PC-3 (cell line): ENCODE measurements at regions of chr11 and their contacts with region 1.

Region 1: DNA sequence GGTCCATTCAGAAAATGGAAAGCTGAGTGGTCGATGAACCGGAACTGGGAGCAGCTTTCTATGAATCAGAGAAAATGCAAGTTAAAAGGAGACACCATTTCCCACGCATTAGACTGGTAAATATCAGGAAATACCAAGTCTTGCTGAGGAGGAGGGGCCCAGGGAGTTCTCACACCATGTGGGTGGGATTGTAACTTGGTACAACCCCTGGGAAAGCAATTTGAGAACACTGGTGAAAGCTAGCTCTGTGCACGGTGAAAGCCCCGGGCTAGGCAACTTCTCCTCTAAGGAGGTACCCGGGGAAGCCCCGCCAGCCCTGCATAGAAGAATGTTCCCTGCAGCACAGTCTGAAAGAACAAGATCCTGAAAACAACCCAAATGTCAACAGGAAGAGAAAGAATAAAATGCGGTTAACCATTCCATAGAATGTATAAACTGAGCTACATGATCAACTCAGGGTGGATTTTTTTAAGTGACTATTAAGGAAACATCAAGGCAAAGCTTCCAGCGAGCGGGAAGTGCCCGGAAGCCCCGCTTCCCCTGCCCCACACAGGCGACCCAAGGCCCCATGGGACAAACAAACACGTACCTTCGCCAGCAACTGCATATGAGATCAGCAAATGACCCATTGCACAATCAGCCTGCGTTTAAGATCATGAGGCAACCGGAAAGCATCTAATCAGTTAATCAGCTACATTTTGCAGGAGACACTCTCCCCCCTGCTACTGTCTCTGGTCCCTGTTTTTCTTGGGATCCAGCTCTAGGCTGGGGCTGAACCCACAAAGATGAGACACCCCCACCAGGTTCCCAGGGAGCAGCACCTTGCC is 11.3 kb downstream of the SHANK2 start:
- DNase-seq: no peak
- ATAC-seq: no peak
- H3K4me3 ChIP-seq: no peak overlapping the region
- H3K27ac ChIP-seq: no peak overlapping the region
- H3K4me1 ChIP-seq: no peaks in the 10 kb centered on the region
- H3K27me3 ChIP-seq: no peaks in the 10 kb centered on the region
- CTCF ChIP-seq: no peak

Region 2: DNA sequence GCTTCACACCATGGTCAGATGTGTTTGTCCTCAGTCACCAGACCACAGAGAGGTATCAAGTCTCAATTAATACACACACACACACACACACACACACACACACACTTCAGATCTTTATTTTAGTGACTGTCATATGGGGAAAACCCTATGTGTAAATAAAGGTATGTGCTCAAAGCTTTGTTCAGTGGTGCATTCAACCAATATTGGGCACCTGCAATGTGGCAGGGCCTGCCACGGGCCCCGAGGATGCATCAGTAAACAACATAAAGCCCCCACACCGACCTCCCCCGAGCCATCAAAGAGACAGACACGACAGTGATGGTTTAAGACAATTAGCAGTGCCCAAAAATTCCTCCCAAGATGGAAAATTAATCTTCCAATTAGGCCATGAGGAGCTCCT is 40.3 kb before region 1 on chr11:
- CTCF ChIA-PET with region 1: no interaction called
- POLR2A ChIA-PET with region 1: interaction called, 16 read pairs
- intact Hi-C with region 1: no loop called
- DNase-seq: no peak
- ATAC-seq: no peak
- H3K4me3 ChIP-seq: no peak overlapping the region
- H3K27ac ChIP-seq: no peak overlapping the region
- H3K4me1 ChIP-seq: peaks cover 5% of the 10 kb centered on the region; the same call in 1 of the 2 replicates
- H3K27me3 ChIP-seq: no peaks in the 10 kb centered on the region
- CTCF ChIP-seq: no peak